ENCODE measurements at regions of chr1 and their contacts with region 1.

Region 1: GRCh38 chr1:159839116-159839849 is 12.6 kb downstream of the SLAMF8 start:
- DNase-seq: no peak
- H3K4me3 ChIP-seq: no peak overlapping the region
- CTCF ChIP-seq: no peak

Region 2: DNA sequence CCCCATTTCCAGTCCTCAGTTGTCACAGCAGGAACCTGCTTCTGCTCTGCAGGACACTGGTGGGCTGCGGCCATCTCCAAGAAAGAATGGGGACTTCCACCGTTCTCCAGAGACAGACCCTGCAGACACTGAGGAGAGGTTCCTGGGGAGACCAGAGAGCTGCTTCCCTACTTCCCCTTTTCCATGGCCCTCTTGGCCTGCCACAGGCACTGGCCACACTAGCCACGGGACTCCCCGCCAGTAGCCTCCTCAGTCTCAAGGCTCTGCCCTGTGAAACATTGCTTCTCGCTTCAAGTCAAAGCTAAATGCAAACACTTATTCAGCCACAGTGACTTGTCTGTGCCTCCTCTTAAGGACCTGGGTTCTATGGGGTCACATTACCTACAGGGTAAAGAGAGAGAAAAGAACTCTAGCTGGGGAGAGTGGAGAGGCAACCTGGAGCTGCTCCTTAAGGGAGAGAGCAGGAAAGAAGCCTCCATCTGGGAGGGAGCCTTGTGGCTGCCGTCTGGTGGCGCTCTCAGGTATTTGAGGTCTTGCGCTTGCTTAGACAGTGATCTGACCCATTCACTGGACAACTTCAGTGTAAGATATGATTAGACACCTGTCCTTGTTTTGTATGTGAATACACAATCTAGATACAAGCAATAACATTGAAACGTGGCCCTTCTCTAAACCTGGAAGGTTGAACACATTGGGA is 18.0 kb before region 1 on chr1:
- CTCF ChIA-PET with region 1: interaction called, 14 read pairs
- POLR2A ChIA-PET with region 1: no interaction called
- DNase-seq: no peak
- H3K4me3 ChIP-seq: no peak overlapping the region
- CTCF ChIP-seq: peak; percentile 73

Region 3: DNA sequence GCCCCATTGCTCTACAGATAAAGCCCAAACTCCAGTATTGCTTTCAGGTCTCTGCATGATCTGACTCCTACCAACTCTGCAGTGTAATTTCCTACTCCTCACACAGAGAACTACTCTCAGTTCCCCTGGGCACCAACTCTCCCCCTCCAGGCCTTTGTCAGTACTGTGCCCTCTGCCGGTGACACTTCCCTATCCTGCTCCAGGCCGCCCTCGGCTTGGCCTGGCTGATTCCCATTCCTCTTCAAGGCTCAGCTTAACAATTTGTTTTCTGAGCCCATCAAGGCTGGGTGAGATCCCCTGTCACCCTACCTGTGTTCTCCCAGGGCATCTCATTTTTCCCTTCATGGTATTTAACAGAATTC is 10.0 kb before region 1 on chr1:
- CTCF ChIA-PET with region 1: interaction called, 10 read pairs
- POLR2A ChIA-PET with region 1: no interaction called
- DNase-seq: no peak
- H3K4me3 ChIP-seq: no peak overlapping the region
- CTCF ChIP-seq: peak; percentile 19

Region 4: GRCh38 chr1:159936273-159936904 is 97.1 kb after region 1 on chr1:
- CTCF ChIA-PET with region 1: no interaction called
- POLR2A ChIA-PET with region 1: no interaction called
- DNase-seq: no peak
- H3K4me3 ChIP-seq: no peak overlapping the region
- CTCF ChIP-seq: peak; percentile 99